ENCODE measurements at regions of chr5 and their contacts with region 1.

Region 1: DNA sequence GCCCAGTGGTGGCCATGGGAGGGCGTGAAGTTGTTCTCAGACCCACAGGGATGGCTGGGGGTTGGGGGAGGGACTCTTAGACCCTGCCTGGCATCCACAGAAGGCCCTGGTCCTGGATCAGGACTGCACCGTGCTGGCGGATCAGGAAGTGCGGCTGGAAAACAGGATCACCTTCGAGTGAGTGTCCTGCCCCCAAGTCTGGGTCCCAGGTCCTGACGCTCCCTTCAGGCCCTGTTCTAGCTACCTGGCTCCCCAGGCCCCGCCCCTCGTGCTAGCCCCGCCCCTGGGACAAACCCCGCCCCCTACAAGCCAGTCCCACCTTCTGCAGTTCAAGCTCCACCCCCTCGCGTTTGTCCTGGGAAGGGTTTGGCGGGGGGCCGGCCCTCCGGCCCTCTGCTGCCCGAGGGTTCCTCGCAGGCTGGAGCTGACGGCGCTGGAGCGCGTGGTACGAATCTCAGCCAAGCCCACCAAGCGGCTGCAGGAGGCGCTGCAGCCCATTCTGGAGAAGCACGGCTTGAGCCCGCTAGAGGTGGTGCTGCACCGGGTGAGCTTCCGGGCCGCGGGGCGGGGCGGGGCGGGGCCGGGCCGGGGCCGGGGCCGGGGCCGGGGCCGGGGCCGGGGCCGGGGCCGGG is 12.9 kb downstream of the RGS14 start:
- DNase-seq: no peak
- ATAC-seq: peak; percentile 79
- H3K4me3 ChIP-seq: peak overlapping the region; percentile 51 to 63
- H3K27ac ChIP-seq: 0 out of 2 replicates have a peak overlapping the region, but pooled peaks have one; percentile 51
- H3K4me1 ChIP-seq: peaks cover 9% of the 10 kb centered on the region
- H3K27me3 ChIP-seq: no peaks in the 10 kb centered on the region
- CTCF ChIP-seq: no peak; the same call in 1 of the 2 replicates

Region 2: DNA sequence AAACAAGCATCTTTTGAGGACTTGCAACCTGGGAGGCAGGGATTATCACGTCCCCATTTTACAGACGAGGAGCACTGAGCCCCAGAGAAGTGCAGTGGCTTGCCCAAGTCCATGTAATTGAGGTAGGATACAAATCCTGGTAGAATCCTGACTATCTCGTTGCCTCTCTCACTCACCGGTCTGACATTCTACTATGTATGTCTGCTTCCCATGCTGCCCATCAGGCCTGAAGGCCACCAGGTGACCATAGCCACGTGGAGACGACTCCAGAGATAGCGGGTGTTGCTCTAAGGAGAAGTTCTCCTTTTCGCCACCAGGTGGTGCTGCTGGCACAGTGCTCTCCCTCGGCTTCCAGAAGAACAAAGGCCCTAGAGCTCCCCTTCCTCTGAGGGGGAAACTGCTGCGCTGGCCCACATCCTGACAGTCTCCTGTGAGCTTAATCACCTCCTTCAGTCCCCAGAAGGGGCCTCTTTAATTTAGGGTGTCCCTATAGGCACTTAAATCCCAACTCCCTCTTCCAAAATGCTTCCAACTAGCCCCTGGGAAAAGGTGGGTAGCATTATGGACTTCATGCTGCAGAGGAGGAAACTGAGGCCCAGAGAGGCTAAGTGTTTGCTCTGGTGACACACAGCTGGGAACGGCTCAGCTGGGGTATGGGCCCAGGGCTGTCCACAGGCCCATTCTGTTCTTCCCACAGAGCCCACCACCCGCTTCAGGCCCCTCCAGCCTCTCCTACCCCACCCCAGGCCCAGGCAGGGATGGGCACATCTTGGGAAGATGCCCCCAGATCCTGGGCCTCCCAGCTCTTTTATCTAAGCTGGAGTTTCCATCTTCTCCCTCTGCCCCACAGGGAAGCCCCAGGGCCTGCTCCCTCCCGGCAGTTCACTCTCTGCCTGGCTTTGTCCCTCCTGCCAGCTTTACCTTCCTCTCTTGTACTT is 20.0 kb after region 1 on chr5:
- CTCF ChIA-PET with region 1: interaction called, 10 read pairs
- POLR2A ChIA-PET with region 1: no interaction called
- in situ Hi-C with region 1: no loop called
- intact Hi-C with region 1: no loop called
- DNase-seq: no peak
- ATAC-seq: peak; percentile 92
- H3K4me3 ChIP-seq: no peak overlapping the region
- H3K27ac ChIP-seq: peak overlapping the region; percentile 60; the same call in 1 of the 2 replicates
- H3K4me1 ChIP-seq: peaks cover 3% of the 10 kb centered on the region; the same call in 1 of the 2 replicates
- H3K27me3 ChIP-seq: no peaks in the 10 kb centered on the region
- CTCF ChIP-seq: peak; percentile 97

Region 3: DNA sequence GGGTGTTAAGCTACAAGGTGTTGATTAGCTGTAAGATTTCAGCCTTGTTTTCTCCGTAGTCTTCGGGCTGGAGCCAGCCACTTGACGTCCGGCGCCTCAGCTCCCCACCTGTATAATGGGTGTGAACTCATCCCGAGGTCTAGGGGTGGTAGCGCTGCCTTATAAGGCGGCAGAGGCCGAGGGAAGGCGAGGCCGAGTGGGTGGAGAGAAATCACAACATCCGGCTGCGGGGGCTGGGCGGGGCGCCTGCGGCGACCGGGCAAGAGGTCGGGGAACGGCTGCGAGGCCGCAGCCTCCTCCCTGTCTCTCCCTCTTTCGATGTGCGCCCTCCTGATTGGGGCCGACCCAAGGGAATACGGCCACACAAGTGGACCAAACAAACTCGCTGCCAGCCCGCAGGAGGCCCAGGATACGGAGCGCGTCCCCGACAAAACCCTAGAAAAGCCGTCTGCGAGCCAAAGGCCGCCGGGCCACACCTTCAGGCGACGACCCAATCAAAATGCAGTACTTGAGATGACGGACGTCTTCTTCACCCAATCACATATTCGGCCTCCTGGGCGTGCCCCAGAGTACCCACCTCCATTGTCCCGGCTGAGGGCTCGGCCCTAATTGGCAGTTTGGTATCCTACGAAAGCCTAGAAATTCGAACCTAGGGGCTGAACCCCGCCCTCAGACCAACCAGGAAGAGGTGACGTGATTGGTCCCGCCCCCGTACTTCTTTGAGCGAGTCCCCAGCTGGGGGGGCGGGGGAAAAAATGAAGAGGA is 55.4 kb after region 1 on chr5:
- CTCF ChIA-PET with region 1: interaction called, 12 read pairs
- POLR2A ChIA-PET with region 1: interaction called, 10 read pairs
- in situ Hi-C with region 1: no loop called
- intact Hi-C with region 1: no loop called
- DNase-seq: peak; percentile 100
- ATAC-seq: peak; percentile 94
- H3K4me3 ChIP-seq: peak overlapping the region; percentile 60 to 62
- H3K27ac ChIP-seq: peak overlapping the region; percentile 97
- H3K4me1 ChIP-seq: peaks cover 18% of the 10 kb centered on the region
- H3K27me3 ChIP-seq: no peaks in the 10 kb centered on the region
- CTCF ChIP-seq: no peak

Region 4: GRCh38 chr5:177431317-177432142 is 60.9 kb after region 1 on chr5:
- CTCF ChIA-PET with region 1: interaction called, 12 read pairs
- POLR2A ChIA-PET with region 1: interaction called, 10 read pairs
- in situ Hi-C with region 1: no loop called
- intact Hi-C with region 1: no loop called
- DNase-seq: no peak
- ATAC-seq: no peak
- H3K4me3 ChIP-seq: no peak overlapping the region
- H3K27ac ChIP-seq: no peak overlapping the region
- H3K4me1 ChIP-seq: peaks cover 10% of the 10 kb centered on the region
- H3K27me3 ChIP-seq: no peaks in the 10 kb centered on the region
- CTCF ChIP-seq: no peak

Region 5: DNA sequence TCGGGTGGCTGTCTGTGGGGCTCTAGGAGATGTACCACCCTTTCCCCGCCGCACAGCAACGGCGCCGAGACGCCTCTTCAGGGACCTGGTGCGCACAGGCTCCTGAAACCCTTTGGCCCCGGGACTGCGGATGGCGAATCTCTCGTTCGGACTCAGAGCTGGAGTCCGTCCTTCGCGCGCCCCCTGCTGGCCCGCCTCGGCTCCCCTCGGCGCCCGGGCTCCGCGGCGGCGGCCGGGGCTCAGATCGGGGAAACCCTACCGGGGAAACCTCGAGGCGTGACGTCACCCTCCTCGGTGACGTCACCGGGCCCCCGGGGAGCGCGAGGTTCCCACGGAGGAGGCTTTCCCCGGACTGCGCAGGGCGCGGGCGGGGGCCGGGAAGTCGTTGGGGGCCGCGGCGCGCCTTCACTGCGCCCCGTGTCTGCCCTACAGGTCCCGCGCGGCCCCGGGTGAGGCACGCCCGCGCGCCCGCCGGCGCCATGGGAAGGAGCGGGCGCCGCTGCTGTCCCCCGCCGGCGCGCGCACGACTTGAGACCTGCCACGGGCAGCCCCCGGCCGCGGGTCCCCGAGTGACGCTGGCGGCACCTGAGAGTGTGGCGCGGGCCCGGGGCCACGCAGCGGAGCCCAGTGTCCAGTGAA is 83.9 kb after region 1 on chr5:
- CTCF ChIA-PET with region 1: interaction called, 5 read pairs
- POLR2A ChIA-PET with region 1: interaction called, 13 read pairs
- in situ Hi-C with region 1: no loop called
- intact Hi-C with region 1: no loop called
- DNase-seq: peak; percentile 57
- ATAC-seq: peak; percentile 68
- H3K4me3 ChIP-seq: peak overlapping the region; percentile 50 to 61
- H3K27ac ChIP-seq: peak overlapping the region; percentile 78; the same call in 1 of the 2 replicates
- H3K4me1 ChIP-seq: peaks cover 41% of the 10 kb centered on the region
- H3K27me3 ChIP-seq: no peaks in the 10 kb centered on the region
- CTCF ChIP-seq: peak; percentile 95

Measured in Panc1 (cell line).